ENCODE measurements at regions of chr3 and their contacts with region 1.

Region 1: GRCh38 chr3:193971261-193971751 is 164.6 kb upstream of the HES1 start:
- DNase-seq: no peak
- H3K4me3 ChIP-seq: no peak overlapping the region
- H3K4me3 Mint-ChIP-seq: no peak overlapping the region
- H3K27ac Mint-ChIP-seq: no peak overlapping the region
- H3K4me1 ChIP-seq: peaks cover 28% of the 10 kb centered on the region
- H3K4me1 Mint-ChIP-seq: peaks cover 33% of the 10 kb centered on the region
- H3K27me3 ChIP-seq: no peaks in the 10 kb centered on the region
- H3K27me3 Mint-ChIP-seq: no peaks in the 10 kb centered on the region
- CTCF ChIP-seq: no peak

Region 2: GRCh38 chr3:193788189-193788991 is 182.9 kb before region 1 on chr3:
- CTCF ChIA-PET with region 1: no interaction called
- POLR2A ChIA-PET with region 1: no interaction called
- intact Hi-C with region 1: loop called (anchors 10 kb)
- DNase-seq: peak; percentile 57 to 72
- H3K4me3 ChIP-seq: no peak overlapping the region
- H3K4me3 Mint-ChIP-seq: no peak overlapping the region
- H3K27ac Mint-ChIP-seq: peak overlapping the region; percentile 61
- H3K4me1 ChIP-seq: peaks cover 59% of the 10 kb centered on the region
- H3K4me1 Mint-ChIP-seq: peaks cover 55% of the 10 kb centered on the region
- H3K27me3 ChIP-seq: no peaks in the 10 kb centered on the region
- H3K27me3 Mint-ChIP-seq: no peaks in the 10 kb centered on the region
- CTCF ChIP-seq: peak; percentile 58 to 59

Measured in Caco-2 (cell line).